Heart right ventricle (tissue), 16 donors: ENCODE measurements at regions of chr7 and their contacts with region 1.

Region 1: GRCh38 chr7:90178679-90179278 is 24.5 kb downstream of the STEAP1 start:
- DNase-seq: no peak
- ATAC-seq: no peak
- H3K4me3 ChIP-seq: no peak overlapping the region
- H3K27ac ChIP-seq: no peak overlapping the region
- H3K4me1 ChIP-seq: peaks cover 0 to 11% (median 0%) of the 10 kb centered on the region in 9 donors
- H3K27me3 ChIP-seq: no peaks in the 10 kb centered on the region
- CTCF ChIP-seq: no peak

Region 2: DNA sequence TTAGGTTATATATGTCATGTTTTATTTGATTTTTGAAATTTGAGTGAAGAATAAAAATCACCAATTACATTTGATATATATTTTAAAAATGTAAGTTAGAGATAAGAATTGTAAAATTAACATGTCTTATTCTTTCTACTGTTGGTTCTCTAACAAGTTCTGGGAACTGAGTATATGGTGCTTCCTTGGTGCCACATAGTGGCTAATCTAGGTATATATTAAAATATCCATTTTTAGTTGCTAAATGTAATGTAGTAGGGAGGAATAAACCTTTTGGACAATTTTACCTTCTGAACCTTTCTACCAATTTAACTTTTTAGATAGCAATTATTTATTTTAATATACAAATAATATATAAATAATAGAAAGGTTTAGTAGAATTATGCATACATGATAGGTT is 83.7 kb after region 1 on chr7:
- intact Hi-C with region 1: loop called in 1 of 10 experiments (anchors 10 kb)
- DNase-seq: no peak
- ATAC-seq: peak in 1 of 8 donors; percentile 52
- H3K4me3 ChIP-seq: no peak overlapping the region
- H3K27ac ChIP-seq: no peak overlapping the region
- H3K4me1 ChIP-seq: peaks cover 0 to 20% (median 0%) of the 10 kb centered on the region in 9 donors
- H3K27me3 ChIP-seq: no peaks in the 10 kb centered on the region
- CTCF ChIP-seq: peak in 8 of 9 donors; percentile 6 to 62 (median 50)